Calu3 (cell line): ENCODE measurements at regions of chr6 and their contacts with region 1.

Region 1: DNA sequence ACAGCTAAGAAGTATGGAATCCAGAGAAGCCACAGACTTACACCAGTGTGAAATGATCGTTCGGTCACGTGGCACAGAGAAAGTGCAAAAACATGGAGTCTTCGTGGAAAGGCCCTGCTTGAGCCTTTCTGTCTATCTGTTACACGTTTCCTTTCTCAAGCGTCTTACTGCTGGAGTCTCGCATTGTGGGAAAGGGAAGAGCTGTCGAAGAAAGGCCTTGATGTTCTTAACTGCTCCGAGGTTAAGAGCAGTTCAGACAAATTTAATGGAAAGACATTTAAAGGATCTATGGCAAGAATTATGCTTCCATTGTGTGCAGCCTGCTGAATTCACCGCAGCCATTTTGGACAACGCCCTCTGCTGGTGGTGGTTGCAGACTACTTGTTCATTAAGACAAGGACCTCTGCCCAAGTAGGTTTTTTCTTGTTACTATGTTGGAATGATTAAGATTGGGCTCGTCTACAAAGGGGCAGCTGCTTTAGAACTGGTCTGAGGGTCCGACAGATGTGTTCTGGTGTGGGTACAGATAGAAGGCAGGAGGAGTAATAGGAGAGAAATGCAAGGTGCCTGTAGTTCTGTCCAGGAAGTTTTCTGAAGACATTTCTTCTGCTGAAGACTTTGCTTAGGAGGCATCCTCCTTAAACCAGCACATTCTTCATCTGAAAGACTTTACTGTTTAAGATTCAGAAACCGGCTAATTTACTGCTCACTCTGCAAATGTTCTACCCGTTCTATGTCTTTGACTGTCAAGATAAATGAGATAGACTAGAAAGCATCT is 24.7 kb upstream of the CCN6 start:
- DNase-seq: peak; percentile 78
- H3K4me3 Mint-ChIP-seq: no peak overlapping the region
- H3K27ac Mint-ChIP-seq: no peak overlapping the region
- H3K4me1 Mint-ChIP-seq: peaks cover 15% of the 10 kb centered on the region
- H3K27me3 Mint-ChIP-seq: peaks cover 31% of the 10 kb centered on the region
- CTCF ChIP-seq: peak; percentile 41

Region 2: DNA sequence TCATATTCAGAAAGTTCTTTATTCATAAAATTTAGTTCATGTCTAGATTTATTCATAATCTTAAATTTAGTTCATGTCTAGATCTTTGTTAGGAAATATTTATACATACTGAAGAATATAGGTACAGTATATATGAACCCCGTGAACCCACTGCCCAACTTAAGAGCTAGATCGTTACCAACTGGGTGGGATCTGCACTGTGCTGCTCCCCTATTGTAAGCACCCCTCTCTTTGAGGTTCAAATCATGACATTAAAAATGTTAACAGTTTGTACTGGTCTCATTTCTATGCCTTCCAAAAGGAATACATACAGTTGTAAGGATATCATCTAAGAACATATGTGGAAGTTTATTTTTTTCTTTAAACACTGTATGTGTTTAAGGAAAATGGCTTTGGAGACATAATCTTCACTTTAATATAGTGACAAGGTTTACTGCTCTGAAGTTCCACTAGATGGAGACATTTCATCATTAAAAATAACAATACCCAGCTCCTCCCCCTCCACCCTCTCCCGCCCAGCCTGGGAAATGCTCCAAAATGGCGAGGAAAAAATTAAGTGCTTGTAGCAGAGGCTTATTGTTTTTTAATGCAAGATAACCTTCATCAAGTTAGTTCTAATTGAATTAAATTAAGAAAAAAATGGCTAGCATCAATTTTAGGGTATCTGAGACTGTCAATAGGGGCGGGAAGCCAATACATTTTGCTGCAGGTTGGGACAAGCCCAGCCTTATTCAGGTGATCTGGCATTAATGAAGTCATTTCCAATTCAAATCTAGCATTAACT is 319.4 kb before region 1 on chr6:
- CTCF ChIA-PET with region 1: no interaction called
- intact Hi-C with region 1: loop called (anchors 1 kb)
- DNase-seq: peak; percentile 59
- H3K4me3 Mint-ChIP-seq: no peak overlapping the region
- H3K27ac Mint-ChIP-seq: no peak overlapping the region
- H3K4me1 Mint-ChIP-seq: peaks cover 15% of the 10 kb centered on the region
- H3K27me3 Mint-ChIP-seq: no peaks in the 10 kb centered on the region
- CTCF ChIP-seq: peak; percentile 75

Region 3: GRCh38 chr6:112180095-112180820 is 151.0 kb after region 1 on chr6:
- CTCF ChIA-PET with region 1: no interaction called
- intact Hi-C with region 1: no loop called
- DNase-seq: peak; percentile 56
- H3K4me3 Mint-ChIP-seq: no peak overlapping the region
- H3K27ac Mint-ChIP-seq: no peak overlapping the region
- H3K4me1 Mint-ChIP-seq: peaks cover 9% of the 10 kb centered on the region
- H3K27me3 Mint-ChIP-seq: no peaks in the 10 kb centered on the region
- CTCF ChIP-seq: peak; percentile 30